ENCODE measurements at regions of chr3 and their contacts with region 1.

Region 1: GRCh38 chr3:160956806-160957205 is 148.3 kb downstream of the B3GALNT1 start:
- DNase-seq: no peak
- H3K4me3 Mint-ChIP-seq: no peak overlapping the region
- H3K27ac Mint-ChIP-seq: no peak overlapping the region
- H3K4me1 Mint-ChIP-seq: no peaks in the 10 kb centered on the region
- H3K27me3 Mint-ChIP-seq: peaks cover 11% of the 10 kb centered on the region

Region 2: GRCh38 chr3:160697628-160698382 is 259.0 kb before region 1 on chr3:
- CTCF ChIA-PET with region 1: no interaction called
- POLR2A ChIA-PET with region 1: no interaction called
- DNase-seq: no peak
- H3K4me3 Mint-ChIP-seq: no peak overlapping the region
- H3K27ac Mint-ChIP-seq: no peak overlapping the region
- H3K4me1 Mint-ChIP-seq: peaks cover 4% of the 10 kb centered on the region
- H3K27me3 Mint-ChIP-seq: peaks cover 17% of the 10 kb centered on the region

Region 3: DNA sequence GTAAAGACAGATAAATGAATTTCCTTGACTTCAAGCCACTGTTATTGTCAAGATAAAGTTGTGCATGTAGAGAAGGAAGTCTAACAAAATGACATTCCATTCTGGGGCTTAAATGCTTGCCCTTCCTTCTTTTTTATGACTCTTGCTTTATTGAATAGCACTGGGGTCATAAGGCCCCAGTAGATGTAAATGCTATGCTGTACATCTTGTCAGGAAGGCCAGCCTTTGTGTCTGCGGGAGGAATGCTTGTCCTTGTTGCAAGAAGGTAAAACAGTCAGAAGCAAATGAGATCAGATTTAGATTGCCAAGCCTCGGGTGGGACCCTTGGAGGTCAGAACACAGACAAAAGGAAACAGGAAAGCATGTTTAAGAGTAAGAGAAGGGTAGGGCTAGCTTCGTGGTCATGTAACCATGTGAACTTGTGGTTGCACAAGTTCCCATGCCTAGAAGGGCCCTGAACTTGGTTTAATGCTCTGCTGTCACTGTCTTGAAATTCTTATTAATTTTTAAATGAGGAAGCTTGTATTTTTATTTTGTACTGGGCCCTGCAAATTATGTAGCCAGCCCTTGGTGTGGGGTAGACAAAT is 119.3 kb before region 1 on chr3:
- CTCF ChIA-PET with region 1: no interaction called
- POLR2A ChIA-PET with region 1: no interaction called
- DNase-seq: no peak
- H3K4me3 Mint-ChIP-seq: no peak overlapping the region
- H3K27ac Mint-ChIP-seq: no peak overlapping the region
- H3K4me1 Mint-ChIP-seq: peaks cover 5% of the 10 kb centered on the region
- H3K27me3 Mint-ChIP-seq: peaks cover 2% of the 10 kb centered on the region

Region 4: GRCh38 chr3:161274719-161275298 is 318.0 kb after region 1 on chr3:
- CTCF ChIA-PET with region 1: interaction called, 17 read pairs
- POLR2A ChIA-PET with region 1: no interaction called
- DNase-seq: peak; percentile 55
- H3K4me3 Mint-ChIP-seq: no peak overlapping the region
- H3K27ac Mint-ChIP-seq: no peak overlapping the region
- H3K4me1 Mint-ChIP-seq: no peaks in the 10 kb centered on the region
- H3K27me3 Mint-ChIP-seq: no peaks in the 10 kb centered on the region